Common myeloid progenitor, CD34-positive (primary cell): ENCODE measurements at regions of chr6 and their contacts with region 1.

Region 1: GRCh38 chr6:88982720-88983119 is 19.3 kb upstream of the RNGTT start:
- DNase-seq: peak; percentile 69 to 83 (median 77)
- H3K4me3 ChIP-seq: peak overlapping the region in 1 of 7 experiments; percentile 14
- H3K27ac ChIP-seq: no peak overlapping the region
- H3K4me1 ChIP-seq: peaks cover 0 to 3% (median 1%) of the 10 kb centered on the region in 4 experiments
- H3K27me3 ChIP-seq: no peaks in the 10 kb centered on the region

Region 2: GRCh38 chr6:89008001-89008814 is 25.5 kb after region 1 on chr6:
- CTCF ChIA-PET with region 1: interaction called, 17 read pairs
- POLR2A ChIA-PET with region 1: no interaction called
- DNase-seq: peak; percentile 23 to 72 (median 63)
- H3K4me3 ChIP-seq: peak overlapping the region in 4 of 7 experiments; percentile 8 to 56 (median 28)
- H3K27ac ChIP-seq: peak overlapping the region in 1 of 2 experiments; percentile 38
- H3K4me1 ChIP-seq: peaks cover 6 to 17% (median 14%) of the 10 kb centered on the region in 4 experiments
- H3K27me3 ChIP-seq: no peaks in the 10 kb centered on the region

Region 3: GRCh38 chr6:89080542-89081422 is 98.1 kb after region 1 on chr6 and contains the start of gene PNRC1:
- CTCF ChIA-PET with region 1: interaction called, 45 read pairs
- POLR2A ChIA-PET with region 1: interaction called, 7 read pairs
- DNase-seq: peak; percentile 99 to 100 (median 99)
- H3K4me3 ChIP-seq: peak within 1 kb of the TSS; percentile 87 to 100 (median 98)
- H3K27ac ChIP-seq: peak within 1 kb of the TSS; percentile 99 to 100
- H3K4me1 ChIP-seq: peaks cover 18 to 35% (median 23%) of the 10 kb centered on the region in 4 experiments
- H3K27me3 ChIP-seq: no peaks in the 10 kb centered on the region

Region 4: GRCh38 chr6:89122625-89123024 is 139.9 kb after region 1 on chr6:
- CTCF ChIA-PET with region 1: interaction called, 13 read pairs
- POLR2A ChIA-PET with region 1: no interaction called
- DNase-seq: peak in 2 of 3 donors; percentile 66 to 71
- H3K4me3 ChIP-seq: no peak overlapping the region
- H3K27ac ChIP-seq: no peak overlapping the region
- H3K4me1 ChIP-seq: peaks cover 0 to 5% (median 4%) of the 10 kb centered on the region in 4 experiments
- H3K27me3 ChIP-seq: no peaks in the 10 kb centered on the region

Region 5: GRCh38 chr6:89242574-89243330 is 260.0 kb after region 1 on chr6:
- CTCF ChIA-PET with region 1: interaction called, 50 read pairs
- POLR2A ChIA-PET with region 1: interaction called, 3 read pairs
- DNase-seq: peak; percentile 65 to 80 (median 77)
- H3K4me3 ChIP-seq: no peak overlapping the region
- H3K27ac ChIP-seq: no peak overlapping the region
- H3K4me1 ChIP-seq: peaks cover 12 to 36% (median 24%) of the 10 kb centered on the region in 4 experiments
- H3K27me3 ChIP-seq: no peaks in the 10 kb centered on the region